Breast epithelium (tissue), 4 donors: ENCODE measurements at regions of chr17 and their contacts with region 1.

Region 1: GRCh38 chr17:16027708-16028584 is 28.3 kb downstream of the TTC19 start:
- DNase-seq: no peak
- H3K4me3 ChIP-seq: no peak overlapping the region
- H3K27ac ChIP-seq: peak overlapping the region; percentile 41 to 44
- H3K4me1 ChIP-seq: no peaks in the 10 kb centered on the region
- H3K27me3 ChIP-seq: no peaks in the 10 kb centered on the region
- CTCF ChIP-seq: no peak
- POLR2A ChIP-seq: no peak

Region 2: DNA sequence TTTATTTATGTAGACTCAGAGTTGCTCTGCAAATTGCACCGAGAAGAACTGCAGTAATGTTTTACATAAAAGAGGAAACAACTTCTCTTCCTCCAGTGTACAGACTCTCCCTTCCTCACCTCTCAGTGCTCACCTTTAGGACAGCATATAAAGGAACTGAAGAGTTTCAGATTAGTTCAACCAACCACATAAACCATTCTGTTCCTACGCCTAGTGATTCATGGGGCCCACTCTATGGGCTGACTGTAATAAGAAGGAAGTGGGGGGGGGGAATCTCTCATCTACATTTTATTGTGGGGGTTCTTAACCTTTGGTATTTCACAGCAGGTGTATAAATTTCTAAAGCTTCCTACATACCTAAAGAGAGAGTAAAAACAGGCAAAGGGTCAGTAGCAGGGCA is 46.7 kb before region 1 on chr17:
- intact Hi-C with region 1: no loop called
- DNase-seq: no peak
- H3K4me3 ChIP-seq: no peak overlapping the region
- H3K27ac ChIP-seq: no peak overlapping the region
- H3K4me1 ChIP-seq: no peaks in the 10 kb centered on the region
- H3K27me3 ChIP-seq: no peaks in the 10 kb centered on the region
- CTCF ChIP-seq: no peak
- POLR2A ChIP-seq: no peak

Region 3: DNA sequence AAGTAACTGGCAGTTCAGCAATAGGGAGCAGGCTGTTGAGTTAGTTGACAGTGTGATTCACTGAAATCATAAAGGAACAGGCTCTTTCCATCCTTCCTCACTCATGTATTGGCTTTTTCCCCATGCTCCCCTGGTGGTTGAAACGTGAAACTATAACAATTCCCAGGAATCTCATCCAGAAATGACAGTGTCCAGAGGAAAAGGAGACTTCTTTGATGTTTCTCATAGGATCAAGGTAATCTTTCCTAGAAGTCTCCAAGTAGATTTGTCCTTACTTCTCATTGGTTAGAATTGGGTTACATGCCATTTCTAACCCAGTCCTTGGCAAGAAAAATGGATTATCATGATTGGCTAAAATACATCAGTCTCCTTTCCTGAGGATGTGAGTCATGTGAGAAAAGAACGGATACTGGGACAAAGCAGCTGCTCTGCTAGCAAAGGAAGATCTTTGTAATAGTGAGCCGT is 14.0 kb before region 1 on chr17:
- intact Hi-C with region 1: loop called (anchors 2 kb)
- DNase-seq: no peak
- H3K4me3 ChIP-seq: no peak overlapping the region
- H3K27ac ChIP-seq: peak overlapping the region in 1 of 2 donors; percentile 8
- H3K4me1 ChIP-seq: no peaks in the 10 kb centered on the region
- H3K27me3 ChIP-seq: no peaks in the 10 kb centered on the region
- CTCF ChIP-seq: peak; percentile 35 to 65 (median 40)
- POLR2A ChIP-seq: no peak

Region 4: GRCh38 chr17:16129441-16130205 is 101.7 kb after region 1 on chr17:
- intact Hi-C with region 1: loop called (anchors 10 kb)
- DNase-seq: no peak
- H3K4me3 ChIP-seq: no peak overlapping the region
- H3K27ac ChIP-seq: no peak overlapping the region
- H3K4me1 ChIP-seq: no peaks in the 10 kb centered on the region
- H3K27me3 ChIP-seq: no peaks in the 10 kb centered on the region
- CTCF ChIP-seq: no peak
- POLR2A ChIP-seq: no peak